HAP-1 (cell line): ENCODE measurements at regions of chr17 and their contacts with region 1.

Region 1: DNA sequence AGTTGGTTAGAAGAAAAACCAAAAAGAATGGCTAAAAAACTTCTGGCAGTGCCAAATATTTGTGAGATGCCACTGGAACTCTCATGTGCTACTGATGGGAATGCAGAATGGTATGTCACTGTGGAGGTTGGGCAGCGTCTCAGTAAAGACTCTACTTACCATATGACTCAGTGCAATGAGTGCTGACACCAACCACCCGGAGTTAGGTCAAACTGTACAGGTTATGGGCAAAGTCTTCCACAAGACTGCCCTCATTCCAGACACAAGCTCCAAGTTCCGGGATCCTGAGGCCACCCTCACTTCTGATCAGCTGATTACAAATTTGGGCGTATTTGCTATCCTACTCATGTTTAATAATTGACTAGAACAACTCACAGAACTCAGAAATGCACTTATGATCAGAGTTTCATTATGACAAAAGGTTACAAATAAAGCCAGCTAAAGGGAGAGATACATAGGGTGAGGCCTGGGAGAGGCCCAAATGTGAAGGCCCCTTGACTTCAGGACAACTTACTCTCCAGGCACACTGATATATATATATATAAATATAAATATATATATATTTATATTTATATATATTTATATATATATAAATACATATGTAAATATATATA is 114.9 kb downstream of the TRIM37 start:
- DNase-seq: no peak
- H3K4me3 ChIP-seq: no peak overlapping the region
- H3K4me1 ChIP-seq: no peaks in the 10 kb centered on the region
- H3K27me3 ChIP-seq: no peaks in the 10 kb centered on the region

Region 2: GRCh38 chr17:58595326-58595725 is 396.5 kb before region 1 on chr17:
- in situ Hi-C with region 1: loop called (anchors 10 kb)
- DNase-seq: no peak
- H3K4me3 ChIP-seq: no peak overlapping the region
- H3K4me1 ChIP-seq: no peaks in the 10 kb centered on the region
- H3K27me3 ChIP-seq: no peaks in the 10 kb centered on the region

Region 3: DNA sequence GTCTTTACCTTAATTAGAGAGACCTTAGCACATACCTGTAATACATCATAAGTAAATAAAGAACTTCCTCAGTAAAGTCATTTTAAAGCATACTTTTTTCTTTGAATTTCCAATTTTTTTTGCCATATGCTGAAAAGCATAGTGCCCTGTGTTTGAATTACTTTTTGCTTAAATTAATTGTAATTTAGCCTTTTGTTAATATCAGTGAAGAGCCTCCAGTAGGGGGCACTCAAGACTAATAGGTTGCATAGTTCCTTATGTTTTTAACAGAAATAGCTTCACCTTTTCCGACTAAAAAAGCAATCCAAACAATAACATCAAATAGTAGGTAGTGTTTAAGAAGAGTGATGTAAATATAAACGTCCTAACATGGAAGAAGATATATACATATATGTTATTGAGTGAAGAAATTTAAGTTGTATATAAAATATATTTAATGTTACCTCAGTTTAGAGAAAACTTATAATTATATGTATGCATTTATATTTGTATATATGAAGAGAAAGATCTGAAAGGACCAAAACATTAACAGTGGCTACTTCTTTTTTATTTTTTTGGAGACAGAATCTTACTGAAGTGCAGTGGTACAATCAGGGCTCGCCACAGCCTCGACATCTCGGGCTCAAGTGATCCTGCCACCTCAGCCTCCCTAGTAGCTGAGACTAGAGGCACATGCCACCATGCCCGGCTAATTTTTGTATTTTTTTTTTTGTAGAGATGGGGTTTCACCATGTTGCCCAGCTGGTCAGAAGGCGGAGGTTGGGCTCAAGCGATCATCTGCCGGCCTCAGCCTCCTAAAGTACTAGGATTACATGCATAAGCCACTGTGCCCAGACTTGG is 280.7 kb before region 1 on chr17:
- in situ Hi-C with region 1: loop called (anchors 5 kb)
- DNase-seq: peak; percentile 51 to 79
- H3K4me3 ChIP-seq: no peak overlapping the region
- H3K4me1 ChIP-seq: no peaks in the 10 kb centered on the region
- H3K27me3 ChIP-seq: no peaks in the 10 kb centered on the region